ENCODE measurements at regions of chr11 and their contacts with region 1.

Region 1: GRCh38 chr11:6413791-6414201 is 5.1 kb downstream of the APBB1 start:
- DNase-seq: peak; percentile 93
- H3K4me3 Mint-ChIP-seq: no peak overlapping the region
- H3K27ac Mint-ChIP-seq: no peak overlapping the region
- H3K4me1 Mint-ChIP-seq: peaks cover 38% of the 10 kb centered on the region
- H3K27me3 Mint-ChIP-seq: no peaks in the 10 kb centered on the region

Region 2: DNA sequence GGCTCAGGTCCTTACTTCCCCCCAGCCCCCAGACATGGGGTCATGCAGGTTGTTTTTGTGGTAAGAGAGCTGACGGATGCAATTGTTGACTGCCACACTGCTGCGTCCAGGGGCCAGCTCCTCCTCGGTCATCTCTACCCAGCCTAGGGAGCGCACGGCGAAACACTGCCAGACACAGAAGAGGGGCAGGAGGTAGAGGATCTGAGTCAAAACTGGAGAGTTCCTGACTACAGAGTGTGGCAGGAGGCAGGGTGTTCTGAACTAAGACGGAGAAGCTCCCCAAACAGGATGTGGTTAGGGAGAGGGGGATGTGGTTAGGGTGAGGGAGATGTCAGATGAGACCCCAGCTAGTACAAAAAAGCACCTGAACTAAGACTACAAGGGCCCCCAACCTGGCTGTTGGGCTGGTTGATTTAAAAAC is 11.2 kb before region 1 on chr11:
- CTCF ChIA-PET with region 1: interaction called, 13 read pairs
- intact Hi-C with region 1: loop called (anchors 1 kb)
- DNase-seq: peak; percentile 94
- H3K4me3 Mint-ChIP-seq: peak overlapping the region; percentile 64
- H3K27ac Mint-ChIP-seq: peak overlapping the region; percentile 84
- H3K4me1 Mint-ChIP-seq: peaks cover 89% of the 10 kb centered on the region
- H3K27me3 Mint-ChIP-seq: no peaks in the 10 kb centered on the region